WTC11 (cell line): ENCODE measurements at regions of chr22 and their contacts with region 1.

Region 1: GRCh38 chr22:41697126-41697775 is 2.1 kb upstream of the MEI1 start:
- DNase-seq: peak; percentile 98
- ATAC-seq: peak; percentile 87
- H3K4me3 Mint-ChIP-seq: peak overlapping the region; percentile 52
- H3K27ac Mint-ChIP-seq: no peak overlapping the region
- H3K4me1 Mint-ChIP-seq: peaks cover 10% of the 10 kb centered on the region
- H3K27me3 Mint-ChIP-seq: peaks cover 28% of the 10 kb centered on the region
- CTCF ChIP-seq: peak; percentile 99

Region 2: GRCh38 chr22:41557401-41558240 is 139.6 kb before region 1 on chr22:
- CTCF ChIA-PET with region 1: no interaction called
- POLR2A ChIA-PET with region 1: no interaction called
- DNase-seq: peak; percentile 39
- ATAC-seq: peak; percentile 16; the same call in 1 of the 2 replicates
- H3K4me3 Mint-ChIP-seq: no peak overlapping the region
- H3K27ac Mint-ChIP-seq: no peak overlapping the region; the same call in 1 of the 2 replicates
- H3K4me1 Mint-ChIP-seq: peaks cover 37% of the 10 kb centered on the region
- H3K27me3 Mint-ChIP-seq: no peaks in the 10 kb centered on the region
- CTCF ChIP-seq: no peak

Region 3: DNA sequence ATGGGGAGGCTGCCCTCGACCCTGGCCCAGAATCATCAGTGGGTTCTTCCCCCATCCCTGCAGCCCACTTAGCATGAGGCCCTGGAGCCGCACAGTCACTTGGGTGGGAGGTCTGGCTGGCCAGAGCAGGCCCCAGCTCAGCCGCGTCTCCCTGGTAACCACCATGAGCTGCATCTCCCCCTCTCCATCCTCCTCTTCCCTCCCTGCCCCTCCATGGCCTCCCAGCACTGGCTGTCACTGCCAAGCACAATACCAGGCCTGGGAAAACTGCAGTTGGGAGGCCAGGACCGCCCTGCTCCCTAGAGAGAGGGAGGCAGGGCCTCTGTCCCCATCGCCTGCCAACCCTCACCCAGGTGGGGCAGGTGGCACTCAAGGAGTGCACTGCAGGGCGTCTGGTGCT is 128.4 kb before region 1 on chr22:
- CTCF ChIA-PET with region 1: no interaction called
- POLR2A ChIA-PET with region 1: no interaction called
- DNase-seq: no peak
- ATAC-seq: no peak
- H3K4me3 Mint-ChIP-seq: no peak overlapping the region
- H3K27ac Mint-ChIP-seq: no peak overlapping the region
- H3K4me1 Mint-ChIP-seq: no peaks in the 10 kb centered on the region
- H3K27me3 Mint-ChIP-seq: peaks cover 5% of the 10 kb centered on the region; the same call in 1 of the 2 replicates
- CTCF ChIP-seq: no peak

Region 4: DNA sequence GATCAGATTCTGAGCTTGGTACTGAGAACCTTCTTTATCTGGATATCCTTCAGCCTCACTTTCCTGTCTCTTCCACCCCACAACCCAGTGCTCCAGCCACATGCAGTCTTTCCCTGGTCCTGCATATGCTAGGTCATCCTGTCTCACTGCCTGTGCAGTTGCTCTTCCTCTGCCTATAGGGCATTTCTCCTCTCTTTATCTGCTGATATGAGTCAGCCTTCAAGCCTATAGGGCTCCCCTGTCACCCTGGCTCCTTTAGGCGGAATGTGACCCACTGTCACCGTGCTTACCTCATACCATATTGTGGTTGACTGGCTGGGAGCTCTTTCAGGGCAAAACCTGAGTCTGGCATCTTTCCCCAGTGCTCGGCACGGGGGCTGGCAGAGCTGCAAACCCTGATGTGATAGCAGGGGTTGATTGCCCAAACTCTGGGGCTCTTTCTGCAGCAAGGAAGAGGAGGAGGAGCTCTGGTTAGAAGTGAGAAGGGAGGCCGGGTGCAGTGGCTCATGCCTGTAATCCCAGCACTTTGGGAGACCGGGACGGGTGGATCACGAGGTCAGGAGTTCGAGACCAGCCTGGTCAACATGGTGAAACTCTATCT is 28.4 kb after region 1 on chr22:
- CTCF ChIA-PET with region 1: interaction called, 25 read pairs
- POLR2A ChIA-PET with region 1: no interaction called
- DNase-seq: no peak
- ATAC-seq: no peak
- H3K4me3 Mint-ChIP-seq: no peak overlapping the region
- H3K27ac Mint-ChIP-seq: no peak overlapping the region; the same call in 1 of the 2 replicates
- H3K4me1 Mint-ChIP-seq: no peaks in the 10 kb centered on the region
- H3K27me3 Mint-ChIP-seq: no peaks in the 10 kb centered on the region; the same call in 1 of the 2 replicates
- CTCF ChIP-seq: no peak

Region 5: DNA sequence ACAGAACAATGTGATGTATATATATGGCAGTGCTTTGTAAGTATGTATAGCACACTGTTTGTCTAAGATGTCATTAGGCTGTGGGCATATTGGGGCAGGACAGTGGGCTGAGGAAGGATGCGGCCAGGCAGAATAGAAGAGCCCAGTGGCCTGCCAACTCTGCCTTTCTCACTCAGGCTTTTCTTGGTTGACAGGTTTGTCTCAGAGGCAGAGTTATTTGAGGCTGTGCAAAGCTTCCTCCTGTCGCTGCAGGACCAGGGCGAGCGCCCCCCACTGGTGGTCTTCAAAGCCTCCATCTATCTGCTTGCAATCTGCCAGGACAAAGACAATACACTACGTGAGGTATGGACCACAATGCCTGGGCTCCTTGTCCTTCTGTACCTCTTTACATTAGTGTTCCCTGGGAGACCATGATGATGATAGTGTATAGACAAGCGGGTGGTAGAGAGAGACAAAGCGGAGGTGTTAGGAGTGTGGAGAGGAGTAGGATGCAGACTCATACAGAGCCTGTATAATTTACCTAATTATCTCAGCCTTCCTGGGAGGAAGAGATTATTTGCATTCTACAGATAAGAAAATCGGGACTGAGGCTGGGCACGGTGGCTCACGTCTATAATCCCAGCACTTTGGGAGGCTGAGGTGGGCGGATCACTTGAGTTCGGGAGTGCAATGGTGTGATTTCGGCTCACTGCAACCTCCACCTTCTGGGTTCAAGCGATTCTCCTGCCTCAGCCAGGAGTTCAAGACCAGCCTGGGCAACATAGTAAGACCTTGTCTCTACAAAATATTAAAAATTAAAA is 65.9 kb after region 1 on chr22:
- CTCF ChIA-PET with region 1: interaction called, 70 read pairs
- POLR2A ChIA-PET with region 1: interaction called, 4 read pairs
- DNase-seq: peak; percentile 91
- ATAC-seq: peak; percentile 98
- H3K4me3 Mint-ChIP-seq: no peak overlapping the region
- H3K27ac Mint-ChIP-seq: no peak overlapping the region
- H3K4me1 Mint-ChIP-seq: no peaks in the 10 kb centered on the region
- H3K27me3 Mint-ChIP-seq: no peaks in the 10 kb centered on the region; the same call in none of the 2 replicates
- CTCF ChIP-seq: peak; percentile 69

Region 6: DNA sequence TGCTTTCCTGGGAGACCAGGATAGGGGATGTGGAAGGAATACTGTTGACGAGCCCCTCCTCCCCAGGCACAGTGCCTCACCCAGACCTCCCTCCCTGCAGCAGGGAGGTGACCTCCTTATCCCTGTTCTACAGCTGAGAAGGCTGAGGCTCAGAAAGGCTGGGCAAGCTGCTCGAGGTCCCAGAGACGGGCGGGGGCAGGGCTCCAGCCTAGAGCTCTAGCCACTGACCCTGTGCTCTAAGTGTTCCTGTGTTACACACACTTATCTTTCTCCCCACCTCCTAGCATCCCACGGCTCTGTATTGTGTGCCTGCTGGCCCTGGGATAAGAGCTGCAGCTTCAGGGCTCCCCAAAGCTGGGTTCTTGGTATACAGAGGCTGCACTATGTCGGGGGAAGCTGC is 111.1 kb after region 1 on chr22:
- CTCF ChIA-PET with region 1: interaction called, 19 read pairs
- POLR2A ChIA-PET with region 1: no interaction called
- DNase-seq: no peak
- ATAC-seq: no peak
- H3K4me3 Mint-ChIP-seq: no peak overlapping the region
- H3K27ac Mint-ChIP-seq: no peak overlapping the region
- H3K4me1 Mint-ChIP-seq: peaks cover 6% of the 10 kb centered on the region
- H3K27me3 Mint-ChIP-seq: no peaks in the 10 kb centered on the region
- CTCF ChIP-seq: no peak

Region 7: GRCh38 chr22:41857155-41857859 is 160.1 kb after region 1 on chr22:
- CTCF ChIA-PET with region 1: interaction called, 52 read pairs
- POLR2A ChIA-PET with region 1: interaction called, 4 read pairs
- DNase-seq: peak; percentile 69
- ATAC-seq: peak; percentile 93
- H3K4me3 Mint-ChIP-seq: no peak overlapping the region
- H3K27ac Mint-ChIP-seq: peak overlapping the region; percentile 86
- H3K4me1 Mint-ChIP-seq: peaks cover 25% of the 10 kb centered on the region
- H3K27me3 Mint-ChIP-seq: no peaks in the 10 kb centered on the region
- CTCF ChIP-seq: peak; percentile 43; the same call in 1 of the 2 replicates

Region 8: DNA sequence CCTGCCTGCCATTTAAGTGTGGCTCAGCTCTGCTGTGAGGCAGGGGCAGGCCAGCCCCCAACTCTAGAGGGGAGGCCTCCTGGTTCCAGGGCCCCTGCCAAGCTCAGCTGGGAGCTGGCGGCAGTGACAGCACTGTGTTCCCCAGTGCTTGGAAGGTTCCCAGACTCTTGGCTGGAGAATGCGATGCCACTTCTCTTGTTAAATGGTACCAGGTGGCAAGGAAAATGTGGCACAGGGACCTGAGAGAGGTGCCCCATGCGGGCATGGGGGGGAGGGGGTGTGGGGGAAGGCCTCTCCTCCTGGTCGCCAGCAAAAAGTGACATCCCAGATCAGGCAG is 237.7 kb after region 1 on chr22:
- CTCF ChIA-PET with region 1: interaction called, 10 read pairs
- POLR2A ChIA-PET with region 1: no interaction called
- DNase-seq: no peak
- ATAC-seq: no peak
- H3K4me3 Mint-ChIP-seq: no peak overlapping the region
- H3K27ac Mint-ChIP-seq: no peak overlapping the region
- H3K4me1 Mint-ChIP-seq: peaks cover 2% of the 10 kb centered on the region; the same call in 1 of the 2 replicates
- H3K27me3 Mint-ChIP-seq: peaks cover 11% of the 10 kb centered on the region
- CTCF ChIP-seq: no peak